MCF 10A (cell line): ENCODE measurements at regions of chr13 and their contacts with region 1.

Region 1: GRCh38 chr13:30465585-30466357 is at the start of gene HMGB1:
- DNase-seq: peak; percentile 99
- H3K4me3 Mint-ChIP-seq: peak within 1 kb of the TSS; percentile 89
- H3K27ac Mint-ChIP-seq: peak within 1 kb of the TSS; percentile 97
- H3K4me1 Mint-ChIP-seq: peaks cover 11% of the 10 kb centered on the region
- H3K27me3 Mint-ChIP-seq: no peaks in the 10 kb centered on the region
- CTCF ChIP-seq: no peak
- total RNA-seq, gene HMGB1: 302 and 307 TPM in 2 replicates

Region 2: DNA sequence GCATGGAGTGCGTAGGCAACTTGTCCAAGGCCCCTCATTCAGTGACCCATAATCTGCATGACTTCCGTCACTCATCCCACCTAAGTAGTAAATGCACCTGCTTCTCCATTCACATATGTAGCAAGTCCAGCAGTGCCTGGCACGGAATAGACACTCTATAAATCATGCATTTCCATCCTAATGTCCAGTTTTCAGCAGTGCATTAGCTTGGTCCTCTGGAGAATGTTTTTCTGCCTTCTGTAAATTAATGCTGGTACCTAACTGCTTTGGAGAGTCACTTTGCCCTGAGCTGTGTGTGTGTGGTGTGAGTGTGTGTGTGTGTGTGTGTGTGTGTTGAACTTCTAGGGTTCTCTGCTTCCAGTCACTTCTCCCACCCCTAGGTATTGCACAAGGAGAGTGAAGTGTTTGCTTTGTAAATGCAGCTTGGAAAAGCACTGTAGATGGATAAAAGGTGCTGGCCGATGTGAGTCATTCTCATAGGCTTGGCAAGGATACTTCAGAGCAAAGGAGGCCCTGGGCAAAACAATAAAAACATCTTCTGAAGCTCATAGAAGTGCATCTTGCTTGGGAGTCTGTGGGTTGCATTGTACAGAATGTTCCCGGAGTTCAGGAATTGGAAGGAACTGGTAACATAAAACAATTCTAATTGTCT is 340.2 kb before region 1 on chr13:
- CTCF ChIA-PET with region 1: interaction called, 36 read pairs
- POLR2A ChIA-PET with region 1: interaction called, 5 read pairs
- intact Hi-C with region 1: no loop called
- DNase-seq: peak; percentile 95
- H3K4me3 Mint-ChIP-seq: peak overlapping the region; percentile 47
- H3K27ac Mint-ChIP-seq: peak overlapping the region; percentile 79
- H3K4me1 Mint-ChIP-seq: peaks cover 48% of the 10 kb centered on the region
- H3K27me3 Mint-ChIP-seq: no peaks in the 10 kb centered on the region
- CTCF ChIP-seq: no peak

Region 3: GRCh38 chr13:30341815-30342570 is 123.8 kb before region 1 on chr13:
- CTCF ChIA-PET with region 1: interaction called, 7 read pairs
- POLR2A ChIA-PET with region 1: interaction called, 14 read pairs
- intact Hi-C with region 1: no loop called
- DNase-seq: peak; percentile 76
- H3K4me3 Mint-ChIP-seq: peak overlapping the region; percentile 34
- H3K27ac Mint-ChIP-seq: peak overlapping the region; percentile 65
- H3K4me1 Mint-ChIP-seq: peaks cover 67% of the 10 kb centered on the region
- H3K27me3 Mint-ChIP-seq: no peaks in the 10 kb centered on the region
- CTCF ChIP-seq: no peak

Region 4: GRCh38 chr13:30429721-30430694 is 35.8 kb before region 1 on chr13:
- CTCF ChIA-PET with region 1: interaction called, 4 read pairs
- POLR2A ChIA-PET with region 1: interaction called, 16 read pairs
- intact Hi-C with region 1: no loop called
- DNase-seq: peak; percentile 89
- H3K4me3 Mint-ChIP-seq: peak overlapping the region; percentile 32
- H3K27ac Mint-ChIP-seq: peak overlapping the region; percentile 57
- H3K4me1 Mint-ChIP-seq: peaks cover 13% of the 10 kb centered on the region
- H3K27me3 Mint-ChIP-seq: no peaks in the 10 kb centered on the region
- CTCF ChIP-seq: no peak

Region 5: DNA sequence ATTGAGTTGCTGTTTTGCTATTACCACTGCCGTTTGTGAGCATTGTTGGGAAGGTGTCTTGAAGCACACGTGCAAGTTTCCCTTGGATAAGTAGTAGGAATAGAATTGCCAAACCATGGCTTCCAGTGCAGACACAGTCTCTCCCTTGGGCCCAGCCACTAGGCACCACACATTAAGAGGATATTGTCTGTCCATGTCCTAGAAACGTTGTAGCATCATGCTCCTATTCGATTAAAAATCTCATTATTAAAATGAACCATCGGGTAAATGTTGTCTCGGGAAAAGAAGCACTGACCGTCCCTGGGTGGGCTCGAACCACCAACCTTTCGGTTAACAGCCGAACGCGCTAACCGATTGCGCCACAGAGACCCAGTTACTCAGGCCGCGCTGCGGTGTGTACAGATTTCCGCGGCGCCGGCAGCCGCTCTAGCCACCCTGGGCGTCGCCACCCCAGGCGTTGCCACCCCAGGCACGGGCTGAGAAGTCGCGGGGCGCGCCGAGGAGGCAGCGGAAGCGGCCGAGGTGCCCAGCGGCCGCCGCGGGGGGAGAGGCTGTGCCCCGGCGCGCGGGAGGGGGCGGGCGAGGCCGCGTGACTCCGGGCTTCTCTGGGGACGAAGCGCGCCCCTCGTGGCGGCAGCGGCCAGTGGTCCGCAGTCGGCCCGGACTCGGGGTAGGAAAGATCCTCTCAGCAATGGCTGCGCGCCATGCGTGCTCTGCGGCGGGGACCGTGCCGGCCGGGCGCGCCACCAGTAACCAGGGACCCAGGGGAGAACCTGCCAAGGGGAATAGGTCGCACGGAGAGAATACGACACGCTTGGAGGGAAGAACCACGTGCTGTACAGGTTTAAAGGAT is 208.1 kb after region 1 on chr13:
- CTCF ChIA-PET with region 1: no interaction called
- POLR2A ChIA-PET with region 1: no interaction called
- intact Hi-C with region 1: loop called (anchors 2 kb)
- DNase-seq: peak; percentile 83
- H3K4me3 Mint-ChIP-seq: peak overlapping the region; percentile 75
- H3K27ac Mint-ChIP-seq: peak overlapping the region; percentile 16
- H3K4me1 Mint-ChIP-seq: no peaks in the 10 kb centered on the region
- H3K27me3 Mint-ChIP-seq: no peaks in the 10 kb centered on the region
- CTCF ChIP-seq: peak; percentile 54

Region 6: DNA sequence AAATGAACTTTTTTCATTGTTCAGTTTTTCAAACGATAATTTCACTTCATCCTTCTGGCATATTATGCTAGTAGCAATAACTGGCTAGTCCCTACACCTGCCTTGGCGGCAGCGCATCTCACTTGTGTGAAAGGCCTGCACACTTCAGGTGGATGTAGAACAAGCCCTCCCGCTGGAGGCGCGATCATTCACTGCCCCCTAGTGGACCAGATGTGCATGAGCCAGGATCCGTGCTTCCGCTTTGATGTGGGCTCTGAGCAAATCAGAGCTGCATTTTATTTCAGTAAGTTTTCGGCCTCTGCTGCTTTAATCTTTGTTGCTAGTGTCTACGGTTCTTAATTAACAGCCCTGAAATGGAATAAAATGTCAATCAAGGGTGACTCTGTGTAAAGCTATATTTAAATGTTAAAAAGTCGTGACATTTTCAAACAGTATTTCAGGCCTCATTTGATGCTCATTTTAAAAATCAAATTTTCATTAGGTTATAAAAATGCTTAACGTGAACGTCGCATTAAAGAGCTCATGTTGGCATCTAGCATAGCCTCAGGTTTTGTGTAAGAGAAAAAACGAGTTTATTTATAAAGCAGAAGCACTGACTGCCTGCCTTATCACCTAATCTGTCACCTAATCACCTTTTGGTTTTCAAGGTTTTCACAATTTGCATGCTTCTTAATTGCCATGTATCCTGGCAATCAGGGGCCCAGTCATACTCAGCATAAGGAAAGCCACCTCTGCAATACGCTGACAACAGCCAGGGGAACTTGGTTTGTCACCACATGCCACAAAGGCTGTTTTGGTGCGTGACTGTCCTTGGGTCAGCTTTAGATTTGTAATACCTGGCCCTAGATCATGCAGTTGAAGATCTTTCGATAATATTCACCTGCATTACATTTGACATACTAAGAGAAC is 578.9 kb after region 1 on chr13:
- CTCF ChIA-PET with region 1: interaction called, 6 read pairs
- POLR2A ChIA-PET with region 1: interaction called, 4 read pairs
- intact Hi-C with region 1: loop called (anchors 1 kb)
- DNase-seq: peak; percentile 81
- H3K4me3 Mint-ChIP-seq: no peak overlapping the region
- H3K27ac Mint-ChIP-seq: peak overlapping the region; percentile 90
- H3K4me1 Mint-ChIP-seq: peaks cover 15% of the 10 kb centered on the region
- H3K27me3 Mint-ChIP-seq: no peaks in the 10 kb centered on the region
- CTCF ChIP-seq: peak; percentile 84